Body of pancreas (tissue), 4 donors: ENCODE measurements at regions of chr5 and their contacts with region 1.

Region 1: GRCh38 chr5:154654486-154655371 is 100.4 kb upstream of the LARP1 start:
- DNase-seq: no peak
- ATAC-seq: no peak
- H3K4me3 ChIP-seq: no peak overlapping the region
- H3K27ac ChIP-seq: peak overlapping the region in 3 of 4 donors; percentile 64 to 79 (median 75)
- H3K4me1 ChIP-seq: peaks cover 37% of the 10 kb centered on the region
- H3K27me3 ChIP-seq: no peaks in the 10 kb centered on the region
- CTCF ChIP-seq: no peak
- POLR2A ChIP-seq: no peak

Region 2: GRCh38 chr5:154575546-154576428 is 78.9 kb before region 1 on chr5:
- intact Hi-C with region 1: no loop called
- DNase-seq: peak in 1 of 4 donors; percentile 24
- ATAC-seq: no peak
- H3K4me3 ChIP-seq: no peak overlapping the region
- H3K27ac ChIP-seq: no peak overlapping the region
- H3K4me1 ChIP-seq: no peaks in the 10 kb centered on the region
- H3K27me3 ChIP-seq: no peaks in the 10 kb centered on the region
- CTCF ChIP-seq: peak in 3 of 7 experiments; percentile 19 to 25 (median 20)
- POLR2A ChIP-seq: no peak

Region 3: DNA sequence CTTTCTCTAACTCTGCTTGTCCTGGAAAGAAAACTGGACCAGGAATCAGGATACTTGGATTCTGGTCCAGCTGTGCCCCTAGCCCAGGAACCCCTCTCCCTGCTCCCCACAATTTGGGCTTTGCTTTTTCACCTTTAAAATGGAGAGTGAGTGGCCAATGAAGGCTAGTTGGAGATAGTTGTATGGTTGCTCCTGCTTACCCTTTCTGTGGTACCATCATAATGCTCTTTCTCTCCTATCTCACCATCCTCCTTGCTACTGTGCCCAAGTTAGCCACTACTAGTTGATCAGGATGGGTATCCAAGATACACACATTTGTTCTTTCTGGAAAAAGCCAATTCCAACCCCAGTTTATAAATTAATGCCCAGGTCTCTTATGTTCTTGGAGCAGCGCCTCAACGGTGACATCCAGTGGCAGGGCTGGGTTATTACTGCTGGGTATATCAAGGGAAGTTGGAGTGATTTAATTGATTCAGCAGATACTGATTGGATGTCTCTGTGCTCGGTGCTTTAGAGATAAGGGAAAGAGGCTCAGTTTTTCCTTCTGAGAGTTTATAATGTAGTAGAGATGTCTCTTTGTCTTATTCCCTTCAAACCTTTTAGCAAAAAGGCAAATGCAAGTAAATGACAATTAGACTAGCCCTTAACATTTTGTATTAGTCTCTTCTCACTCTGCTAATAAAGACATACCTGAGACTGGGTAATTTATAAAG is 157.1 kb after region 1 on chr5:
- intact Hi-C with region 1: loop called (anchors 5 kb)
- DNase-seq: peak; percentile 57 to 67 (median 63)
- ATAC-seq: peak; percentile 90
- H3K4me3 ChIP-seq: no peak overlapping the region
- H3K27ac ChIP-seq: no peak overlapping the region
- H3K4me1 ChIP-seq: no peaks in the 10 kb centered on the region
- H3K27me3 ChIP-seq: no peaks in the 10 kb centered on the region
- CTCF ChIP-seq: peak; percentile 73 to 93 (median 85)
- POLR2A ChIP-seq: no peak

Region 4: GRCh38 chr5:155278532-155278931 is 623.8 kb after region 1 on chr5:
- intact Hi-C with region 1: no loop called
- DNase-seq: no peak
- ATAC-seq: no peak
- H3K4me3 ChIP-seq: no peak overlapping the region
- H3K27ac ChIP-seq: no peak overlapping the region
- H3K4me1 ChIP-seq: no peaks in the 10 kb centered on the region
- H3K27me3 ChIP-seq: no peaks in the 10 kb centered on the region
- CTCF ChIP-seq: no peak
- POLR2A ChIP-seq: no peak